ENCODE measurements at regions of chr19 and their contacts with region 1.

Region 1: GRCh38 chr19:50556282-50557008 is 11.8 kb downstream of the LRRC4B start:
- DNase-seq: peak; percentile 70 to 99
- H3K4me3 ChIP-seq: peak overlapping the region; percentile 45 to 72 (median 62)
- H3K27ac ChIP-seq: no peak overlapping the region
- H3K4me1 ChIP-seq: peaks cover 0 to 19% (median 5%) of the 10 kb centered on the region in 4 experiments; a peak in 5 of 7 replicates
- H3K27me3 ChIP-seq: peaks cover 0 to 30% (median 19%) of the 10 kb centered on the region in 4 experiments; a peak in 6 of 7 replicates
- CTCF ChIP-seq: peak; percentile 90 to 93 (median 90)
- EP300 ChIP-seq: no peak
- POLR2A ChIP-seq: no peak
- RAD21 ChIP-seq: peak; percentile 43 to 65

Region 2: DNA sequence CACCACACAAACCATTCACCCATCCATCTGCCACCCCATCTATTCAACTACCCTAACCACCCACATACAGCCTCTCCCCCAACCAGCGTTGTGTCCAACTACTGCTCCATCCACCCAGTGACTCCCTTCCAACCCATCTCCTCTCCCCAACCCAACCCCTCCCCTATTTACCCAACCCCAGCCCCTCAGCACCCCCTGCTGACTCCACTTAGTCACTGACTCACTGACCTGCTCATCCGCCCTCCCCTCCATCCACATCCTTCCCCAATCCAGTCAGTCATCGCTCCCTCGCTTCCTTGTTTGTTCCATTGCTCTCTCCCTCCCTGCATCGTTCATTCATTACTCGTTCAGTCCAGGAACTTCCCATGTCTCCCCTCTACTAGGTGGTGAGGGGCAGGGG is 266.4 kb before region 1 on chr19:
- CTCF ChIA-PET with region 1: no interaction called
- POLR2A ChIA-PET with region 1: no interaction called
- DNase-seq: no peak
- H3K4me3 ChIP-seq: no peak overlapping the region
- H3K27ac ChIP-seq: no peak overlapping the region
- H3K4me1 ChIP-seq: peaks cover 0 to 20% (median 4%) of the 10 kb centered on the region in 4 experiments; a peak in 5 of 7 replicates
- H3K27me3 ChIP-seq: no peaks in the 10 kb centered on the region
- CTCF ChIP-seq: peak; percentile 15 to 35 (median 24); a peak in 3 of 4 replicates
- EP300 ChIP-seq: no peak
- POLR2A ChIP-seq: no peak
- RAD21 ChIP-seq: peak; percentile 23 to 32; a peak in 2 of 4 replicates

Region 3: DNA sequence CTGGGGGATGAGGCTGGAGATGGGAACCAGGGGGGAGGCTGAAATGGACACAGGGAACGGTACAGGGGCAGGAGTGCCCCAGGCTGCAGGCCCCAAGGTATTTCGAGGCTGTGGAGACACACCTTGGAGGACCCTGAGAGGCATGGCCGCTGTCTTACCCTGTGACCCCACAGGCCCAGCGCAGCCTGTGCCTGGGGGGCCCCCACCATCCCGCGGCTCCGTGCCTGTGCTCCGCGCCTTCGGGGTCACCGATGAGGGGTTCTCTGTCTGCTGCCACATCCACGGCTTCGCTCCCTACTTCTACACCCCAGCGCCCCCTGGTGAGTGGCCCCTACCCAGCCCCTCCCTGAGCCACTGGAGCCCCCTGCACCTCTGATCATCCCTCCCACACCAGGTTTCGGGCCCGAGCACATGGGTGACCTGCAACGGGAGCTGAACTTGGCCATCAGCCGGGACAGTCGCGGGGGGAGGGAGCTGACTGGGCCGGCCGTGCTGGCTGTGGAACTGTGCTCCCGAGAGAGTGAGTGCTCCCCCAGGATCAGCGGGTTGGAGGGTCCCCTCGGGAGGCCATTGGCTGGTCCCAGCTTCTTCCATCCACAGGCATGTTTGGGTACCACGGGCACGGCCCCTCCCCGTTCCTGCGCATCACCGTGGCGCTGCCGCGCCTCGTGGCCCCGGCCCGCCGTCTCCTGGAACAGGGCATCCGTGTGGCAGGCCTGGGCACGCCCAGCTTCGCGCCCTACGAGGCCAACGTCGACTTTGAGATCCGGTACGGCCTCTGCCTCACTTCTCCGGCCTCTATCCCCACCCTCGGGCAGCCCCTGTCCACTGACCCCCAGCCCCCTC is 154.6 kb before region 1 on chr19:
- CTCF ChIA-PET with region 1: no interaction called
- POLR2A ChIA-PET with region 1: no interaction called
- DNase-seq: no peak
- H3K4me3 ChIP-seq: no peak overlapping the region
- H3K27ac ChIP-seq: no peak overlapping the region
- H3K4me1 ChIP-seq: no peaks in the 10 kb centered on the region
- H3K27me3 ChIP-seq: no peaks in the 10 kb centered on the region
- CTCF ChIP-seq: peak in 2 of 3 experiments; percentile 6; a peak in 2 of 4 replicates
- EP300 ChIP-seq: no peak
- POLR2A ChIP-seq: no peak
- RAD21 ChIP-seq: no peak; a peak in 1 of 4 replicates

Region 4: GRCh38 chr19:50486823-50487511 is 69.5 kb before region 1 on chr19:
- CTCF ChIA-PET with region 1: interaction called, 10 read pairs
- POLR2A ChIA-PET with region 1: interaction called, 3 read pairs
- DNase-seq: peak; percentile 88 to 97
- H3K4me3 ChIP-seq: no peak overlapping the region
- H3K27ac ChIP-seq: no peak overlapping the region
- H3K4me1 ChIP-seq: peaks cover 0 to 15% (median 6%) of the 10 kb centered on the region in 4 experiments; a peak in 4 of 7 replicates
- H3K27me3 ChIP-seq: peaks cover 5 to 50% (median 34%) of the 10 kb centered on the region in 4 experiments
- CTCF ChIP-seq: peak; percentile 84 to 98 (median 94)
- EP300 ChIP-seq: no peak
- POLR2A ChIP-seq: no peak
- RAD21 ChIP-seq: peak; percentile 82 to 85

Region 5: DNA sequence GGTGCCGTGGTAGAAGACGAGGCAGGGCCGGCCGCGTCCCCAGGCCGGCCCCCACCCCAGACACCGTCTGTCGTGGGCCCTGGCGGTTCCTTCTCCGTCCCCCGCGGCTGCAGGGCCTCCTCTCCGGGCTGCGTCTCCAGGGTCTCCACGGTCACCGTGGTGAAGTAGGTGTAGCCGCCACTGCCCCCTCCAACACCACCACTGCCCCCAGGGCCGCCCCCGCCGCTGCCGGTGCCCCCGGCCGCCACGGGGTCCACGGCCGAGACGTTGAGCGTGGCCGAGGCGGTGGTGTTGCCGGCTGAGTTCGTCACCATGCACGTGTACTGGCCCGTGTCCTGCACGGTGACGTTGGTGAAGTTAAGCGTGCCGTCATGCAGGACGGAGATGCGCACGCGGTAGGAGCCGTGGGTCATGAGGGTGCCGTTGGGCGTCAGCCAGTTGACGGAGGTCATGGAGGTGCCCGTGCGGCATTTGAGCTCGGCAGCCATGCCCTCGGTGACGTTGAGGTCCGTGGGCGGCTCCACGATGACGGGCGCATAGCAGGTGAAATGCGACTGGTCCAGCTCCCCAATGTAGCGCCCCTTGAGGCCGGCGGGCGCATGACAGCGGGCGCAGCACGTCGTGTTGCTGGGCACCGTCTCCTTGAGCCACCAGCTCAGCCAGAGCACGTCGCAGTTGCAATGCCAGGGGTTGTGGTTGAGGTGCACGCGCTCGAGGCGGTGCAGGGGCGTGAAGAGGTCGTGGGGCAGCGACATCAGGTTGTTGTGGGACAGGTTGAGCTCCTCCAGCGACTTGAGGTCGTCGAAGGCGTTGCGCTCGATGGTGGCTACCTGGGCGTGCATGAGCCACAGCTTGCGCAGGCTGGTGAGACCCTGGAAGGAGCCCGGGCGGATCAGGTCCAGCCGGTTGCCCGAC is 38.1 kb before region 1 on chr19:
- CTCF ChIA-PET with region 1: interaction called, 15 read pairs
- POLR2A ChIA-PET with region 1: no interaction called
- DNase-seq: peak in 1 of 2 experiments; percentile 89
- H3K4me3 ChIP-seq: no peak overlapping the region
- H3K27ac ChIP-seq: no peak overlapping the region
- H3K4me1 ChIP-seq: peaks cover 0 to 3% (median under 1%) of the 10 kb centered on the region in 4 experiments; a peak in 2 of 7 replicates
- H3K27me3 ChIP-seq: peaks cover 0 to 10% (median 3%) of the 10 kb centered on the region in 4 experiments; a peak in 5 of 7 replicates
- CTCF ChIP-seq: peak; percentile 69 to 87 (median 82)
- EP300 ChIP-seq: no peak
- POLR2A ChIP-seq: no peak
- RAD21 ChIP-seq: no peak; a peak in 1 of 4 replicates

Region 6: DNA sequence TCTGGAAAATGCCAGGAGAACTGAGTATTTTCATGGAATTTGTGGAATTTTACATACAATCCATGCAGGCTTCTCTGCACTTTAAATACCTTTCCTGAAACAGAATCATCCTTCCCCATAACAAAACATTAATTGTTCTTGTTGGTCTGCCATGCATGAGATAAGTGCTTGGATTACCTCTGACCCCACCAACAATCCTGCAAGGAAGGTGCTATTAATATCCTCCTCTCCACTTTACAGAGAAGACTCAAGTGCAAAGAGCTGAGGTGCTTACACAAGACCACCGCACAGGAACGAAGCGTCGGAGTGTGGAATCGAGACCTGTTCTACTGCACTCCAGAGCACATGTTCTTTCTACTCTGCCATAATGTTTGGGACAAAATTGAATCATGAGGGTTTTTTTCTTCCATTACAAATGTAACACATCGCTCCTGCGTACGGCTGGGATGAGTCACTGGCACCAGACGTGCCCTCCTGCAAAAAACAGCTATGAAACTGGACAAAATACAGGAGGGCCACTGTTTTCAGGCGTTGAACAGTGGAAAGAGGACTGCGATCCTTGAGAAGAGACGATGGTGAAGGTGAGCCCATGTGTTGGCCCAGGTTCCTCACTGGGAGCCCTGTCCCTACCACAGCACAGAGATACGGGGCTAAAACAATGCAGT is 24.7 kb after region 1 on chr19:
- CTCF ChIA-PET with region 1: interaction called, 26 read pairs
- POLR2A ChIA-PET with region 1: interaction called, 3 read pairs
- DNase-seq: no peak
- H3K4me3 ChIP-seq: no peak overlapping the region
- H3K27ac ChIP-seq: no peak overlapping the region
- H3K4me1 ChIP-seq: no peaks in the 10 kb centered on the region
- H3K27me3 ChIP-seq: peaks cover 0 to 3% (median 0%) of the 10 kb centered on the region in 4 experiments; a peak in 2 of 7 replicates
- CTCF ChIP-seq: no peak
- EP300 ChIP-seq: no peak
- POLR2A ChIP-seq: no peak
- RAD21 ChIP-seq: no peak

Region 7: DNA sequence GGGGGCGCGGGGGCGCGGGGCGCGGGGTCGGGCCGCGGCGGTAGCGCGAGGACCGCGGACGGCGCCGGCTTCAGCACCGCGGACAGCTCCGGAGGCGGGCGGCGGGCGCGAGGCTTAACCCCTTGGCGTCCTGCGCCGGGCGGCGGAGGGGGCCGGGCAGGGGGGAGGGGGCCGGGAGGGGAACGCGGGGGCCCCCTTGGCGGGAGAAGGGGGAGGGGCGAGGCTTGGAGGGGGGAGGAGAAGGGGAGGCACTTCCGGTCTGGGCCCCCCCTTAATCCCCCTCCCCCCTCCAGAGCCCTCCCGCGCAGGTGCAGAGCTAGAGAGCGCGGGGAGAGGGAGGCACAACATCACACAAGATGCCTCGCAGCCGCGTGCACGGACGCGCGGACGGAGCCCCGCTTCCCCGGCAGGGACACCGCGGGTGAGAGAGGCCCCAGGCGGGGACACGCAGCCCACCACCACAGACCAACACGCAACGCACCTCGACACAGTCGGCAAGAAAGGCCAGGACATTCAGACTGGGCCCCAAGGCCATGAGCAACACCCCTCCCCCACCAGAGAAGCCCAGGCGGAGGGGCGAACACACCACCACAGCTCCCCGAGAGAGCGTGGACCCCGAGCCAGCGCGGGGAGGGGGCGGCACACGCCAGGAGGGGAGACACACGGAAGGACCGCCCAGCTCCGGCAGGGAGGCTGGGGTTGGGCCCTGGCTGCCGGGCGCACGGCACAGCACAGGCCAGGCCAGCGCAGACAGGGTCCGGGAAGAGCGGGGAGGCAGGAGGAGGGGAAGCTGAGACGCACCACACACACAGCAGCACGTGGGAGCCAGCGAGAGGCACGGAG is 139.0 kb after region 1 on chr19:
- CTCF ChIA-PET with region 1: interaction called, 10 read pairs
- POLR2A ChIA-PET with region 1: interaction called, 3 read pairs
- DNase-seq: peak in 1 of 2 experiments; percentile 82
- H3K4me3 ChIP-seq: peak overlapping the region; percentile 43 to 60 (median 48)
- H3K27ac ChIP-seq: no peak overlapping the region
- H3K4me1 ChIP-seq: peaks cover 0 to 24% (median 21%) of the 10 kb centered on the region in 4 experiments; a peak in 6 of 7 replicates
- H3K27me3 ChIP-seq: peaks cover 9 to 77% (median 70%) of the 10 kb centered on the region in 4 experiments
- CTCF ChIP-seq: no peak
- EP300 ChIP-seq: no peak
- POLR2A ChIP-seq: no peak
- RAD21 ChIP-seq: no peak